ENCODE measurements at regions of chr2 and their contacts with region 1.

Region 1: GRCh38 chr2:238288650-238289573 is 502 bp upstream of the PER2 start:
- DNase-seq: peak; percentile 98
- H3K4me3 Mint-ChIP-seq: peak overlapping the region; percentile 85
- H3K27ac Mint-ChIP-seq: peak overlapping the region; percentile 72
- H3K4me1 Mint-ChIP-seq: peaks cover 33% of the 10 kb centered on the region
- H3K27me3 Mint-ChIP-seq: no peaks in the 10 kb centered on the region

Region 2: DNA sequence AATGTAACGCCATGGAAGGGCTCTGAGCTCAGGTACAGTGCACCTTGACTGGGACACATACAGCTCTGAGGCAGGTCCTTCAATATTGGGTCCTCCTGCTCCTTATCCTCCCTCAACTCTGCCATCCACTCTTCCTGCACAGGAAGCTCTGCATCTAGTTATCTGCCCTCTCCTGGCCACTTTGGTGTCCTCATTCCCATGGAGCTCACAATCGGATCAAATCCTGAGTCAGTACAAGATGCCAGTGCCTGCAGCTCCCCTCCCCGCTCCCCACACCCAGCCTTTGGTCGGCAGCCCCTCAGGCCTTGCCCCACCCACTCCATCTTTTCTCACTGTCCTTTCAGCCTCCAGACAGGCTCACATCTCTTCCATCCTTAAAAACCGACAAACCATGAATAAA is 603.5 kb before region 1 on chr2:
- CTCF ChIA-PET with region 1: no interaction called
- POLR2A ChIA-PET with region 1: no interaction called
- intact Hi-C with region 1: loop called (anchors 5 kb)
- DNase-seq: peak; percentile 7
- H3K4me3 Mint-ChIP-seq: no peak overlapping the region
- H3K27ac Mint-ChIP-seq: no peak overlapping the region
- H3K4me1 Mint-ChIP-seq: peaks cover 41% of the 10 kb centered on the region
- H3K27me3 Mint-ChIP-seq: no peaks in the 10 kb centered on the region

Region 3: GRCh38 chr2:238009563-238009962 is 279.3 kb before region 1 on chr2:
- CTCF ChIA-PET with region 1: no interaction called
- POLR2A ChIA-PET with region 1: no interaction called
- intact Hi-C with region 1: no loop called
- DNase-seq: no peak
- H3K4me3 Mint-ChIP-seq: no peak overlapping the region
- H3K27ac Mint-ChIP-seq: no peak overlapping the region
- H3K4me1 Mint-ChIP-seq: peaks cover 44% of the 10 kb centered on the region
- H3K27me3 Mint-ChIP-seq: no peaks in the 10 kb centered on the region

Region 4: GRCh38 chr2:238203094-238203972 is 85.6 kb before region 1 on chr2 and contains the start of gene ILKAP:
- CTCF ChIA-PET with region 1: interaction called, 3 read pairs
- POLR2A ChIA-PET with region 1: interaction called, 4 read pairs
- intact Hi-C with region 1: loop called (anchors 2 kb)
- DNase-seq: peak; percentile 91
- H3K4me3 Mint-ChIP-seq: peak within 1 kb of the TSS; percentile 83
- H3K27ac Mint-ChIP-seq: peak within 1 kb of the TSS; percentile 84
- H3K4me1 Mint-ChIP-seq: peaks cover 47% of the 10 kb centered on the region
- H3K27me3 Mint-ChIP-seq: no peaks in the 10 kb centered on the region
- total RNA-seq, gene ILKAP: 46.7 to 50.2 TPM

Region 5: GRCh38 chr2:238320246-238320647 is 31.3 kb after region 1 on chr2 and contains the start of gene TRAF3IP1:
- CTCF ChIA-PET with region 1: no interaction called
- POLR2A ChIA-PET with region 1: interaction called, 3 read pairs
- intact Hi-C with region 1: loop called (anchors 1 kb)
- DNase-seq: peak; percentile 89
- H3K4me3 Mint-ChIP-seq: peak within 1 kb of the TSS; percentile 71
- H3K27ac Mint-ChIP-seq: no peak within 1 kb of the TSS
- H3K4me1 Mint-ChIP-seq: peaks cover 16% of the 10 kb centered on the region
- H3K27me3 Mint-ChIP-seq: peaks cover 3% of the 10 kb centered on the region
- total RNA-seq, gene TRAF3IP1: 8.0 to 9.3 TPM

Region 6: GRCh38 chr2:238438856-238439849 is 150.2 kb after region 1 on chr2:
- CTCF ChIA-PET with region 1: no interaction called
- POLR2A ChIA-PET with region 1: interaction called, 8 read pairs
- intact Hi-C with region 1: loop called (anchors 1 kb)
- DNase-seq: peak; percentile 89
- H3K4me3 Mint-ChIP-seq: peak overlapping the region; percentile 56
- H3K27ac Mint-ChIP-seq: peak overlapping the region; percentile 53
- H3K4me1 Mint-ChIP-seq: peaks cover 47% of the 10 kb centered on the region
- H3K27me3 Mint-ChIP-seq: no peaks in the 10 kb centered on the region